Caco-2 (cell line): ENCODE measurements at regions of chr14 and their contacts with region 1.

Region 1: GRCh38 chr14:31207755-31208545 is at the start of gene HECTD1:
- DNase-seq: peak; percentile 90 to 95
- H3K4me3 ChIP-seq: peak within 1 kb of the TSS; percentile 91
- H3K4me3 Mint-ChIP-seq: peak within 1 kb of the TSS; percentile 84
- H3K27ac Mint-ChIP-seq: peak within 1 kb of the TSS; percentile 95
- H3K4me1 ChIP-seq: peaks cover 17% of the 10 kb centered on the region
- H3K4me1 Mint-ChIP-seq: peaks cover 17% of the 10 kb centered on the region
- H3K27me3 ChIP-seq: no peaks in the 10 kb centered on the region
- H3K27me3 Mint-ChIP-seq: no peaks in the 10 kb centered on the region
- CTCF ChIP-seq: peak; percentile 42 to 79
- total RNA-seq, gene HECTD1: 146 and 147 TPM in 2 replicates

Region 2: GRCh38 chr14:31229638-31230229 is 21.8 kb after region 1 on chr14:
- CTCF ChIA-PET with region 1: interaction called, 11 read pairs
- POLR2A ChIA-PET with region 1: interaction called, 6 read pairs
- intact Hi-C with region 1: loop called (anchors 1 kb)
- DNase-seq: peak; percentile 93 to 95
- H3K4me3 ChIP-seq: no peak overlapping the region
- H3K4me3 Mint-ChIP-seq: peak overlapping the region; percentile 62
- H3K27ac Mint-ChIP-seq: peak overlapping the region; percentile 72
- H3K4me1 ChIP-seq: peaks cover 20% of the 10 kb centered on the region
- H3K4me1 Mint-ChIP-seq: no peaks in the 10 kb centered on the region
- H3K27me3 ChIP-seq: no peaks in the 10 kb centered on the region
- H3K27me3 Mint-ChIP-seq: no peaks in the 10 kb centered on the region
- CTCF ChIP-seq: no peak

Region 3: GRCh38 chr14:31263485-31264133 is 55.7 kb after region 1 on chr14:
- CTCF ChIA-PET with region 1: interaction called, 4 read pairs
- POLR2A ChIA-PET with region 1: interaction called, 3 read pairs
- intact Hi-C with region 1: loop called (anchors 2 kb)
- DNase-seq: peak; percentile 71 to 78
- H3K4me3 ChIP-seq: no peak overlapping the region
- H3K4me3 Mint-ChIP-seq: no peak overlapping the region
- H3K27ac Mint-ChIP-seq: peak overlapping the region; percentile 77
- H3K4me1 ChIP-seq: peaks cover 50% of the 10 kb centered on the region
- H3K4me1 Mint-ChIP-seq: peaks cover 39% of the 10 kb centered on the region
- H3K27me3 ChIP-seq: no peaks in the 10 kb centered on the region
- H3K27me3 Mint-ChIP-seq: no peaks in the 10 kb centered on the region
- CTCF ChIP-seq: no peak

Region 4: DNA sequence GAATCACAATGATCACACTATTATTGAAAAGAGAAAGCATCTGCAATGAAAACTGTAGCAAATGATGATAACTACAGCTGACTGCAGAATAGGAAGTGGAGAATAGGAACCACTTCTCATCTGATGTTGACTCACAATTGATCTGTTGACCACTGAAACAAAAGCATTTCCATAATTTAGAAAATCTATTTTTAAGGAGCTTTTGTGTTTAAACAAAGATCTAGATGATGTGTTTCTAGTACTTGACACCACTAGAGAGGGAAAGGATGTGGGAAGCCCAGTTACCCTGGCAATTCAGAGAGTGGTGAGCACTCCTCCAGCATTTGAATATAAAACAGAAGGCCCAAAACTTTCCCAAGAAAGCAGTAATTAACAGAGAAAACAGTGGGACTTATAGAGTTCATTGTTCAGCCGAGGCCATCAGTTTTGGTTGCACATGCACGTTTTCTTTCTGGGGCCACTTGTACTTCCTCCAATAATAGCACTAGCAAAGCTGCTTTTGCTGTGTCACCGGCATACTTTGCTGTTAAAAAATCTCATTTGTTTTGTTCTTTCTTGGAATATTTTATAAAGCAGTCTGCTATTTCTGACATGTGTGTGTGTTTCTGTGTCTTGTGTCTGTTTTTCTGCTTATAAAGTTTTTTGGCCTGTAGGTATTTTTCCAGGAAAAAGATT is 75.8 kb after region 1 on chr14:
- CTCF ChIA-PET with region 1: interaction called, 9 read pairs
- POLR2A ChIA-PET with region 1: no interaction called
- intact Hi-C with region 1: loop called (anchors 5 kb)
- DNase-seq: no peak
- H3K4me3 ChIP-seq: no peak overlapping the region
- H3K4me3 Mint-ChIP-seq: no peak overlapping the region
- H3K27ac Mint-ChIP-seq: no peak overlapping the region
- H3K4me1 ChIP-seq: peaks cover 25% of the 10 kb centered on the region
- H3K4me1 Mint-ChIP-seq: peaks cover 22% of the 10 kb centered on the region
- H3K27me3 ChIP-seq: no peaks in the 10 kb centered on the region
- H3K27me3 Mint-ChIP-seq: no peaks in the 10 kb centered on the region
- CTCF ChIP-seq: no peak

Region 5: DNA sequence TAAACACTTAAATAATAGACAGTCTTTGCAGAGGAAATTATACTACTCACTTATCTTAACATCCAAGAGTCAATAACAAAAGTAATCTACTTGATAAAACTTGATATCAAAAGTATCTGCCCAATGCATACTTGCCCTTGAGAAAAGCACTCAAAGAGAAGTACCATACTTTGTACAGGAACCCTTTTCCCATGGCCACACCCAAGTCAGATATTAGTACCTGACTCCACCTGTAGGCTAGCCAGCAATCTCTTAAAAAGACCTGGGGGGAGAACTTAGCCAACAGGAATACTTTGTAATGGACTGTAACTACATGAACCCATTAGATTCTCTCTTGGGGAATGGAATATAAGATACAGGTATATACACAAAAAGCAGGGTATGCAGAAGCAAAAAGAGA is 99.2 kb after region 1 on chr14:
- CTCF ChIA-PET with region 1: no interaction called
- POLR2A ChIA-PET with region 1: no interaction called
- intact Hi-C with region 1: loop called (anchors 5 kb)
- DNase-seq: peak in 1 of 2 experiments; percentile 15
- H3K4me3 ChIP-seq: no peak overlapping the region
- H3K4me3 Mint-ChIP-seq: no peak overlapping the region
- H3K27ac Mint-ChIP-seq: no peak overlapping the region
- H3K4me1 ChIP-seq: no peaks in the 10 kb centered on the region
- H3K4me1 Mint-ChIP-seq: no peaks in the 10 kb centered on the region
- H3K27me3 ChIP-seq: no peaks in the 10 kb centered on the region
- H3K27me3 Mint-ChIP-seq: no peaks in the 10 kb centered on the region
- CTCF ChIP-seq: peak; percentile 14 to 21

Region 6: GRCh38 chr14:31326111-31326510 is 118.2 kb after region 1 on chr14:
- CTCF ChIA-PET with region 1: interaction called, 7 read pairs
- POLR2A ChIA-PET with region 1: no interaction called
- intact Hi-C with region 1: loop called (anchors 5 kb)
- DNase-seq: no peak
- H3K4me3 ChIP-seq: no peak overlapping the region
- H3K4me3 Mint-ChIP-seq: no peak overlapping the region
- H3K27ac Mint-ChIP-seq: no peak overlapping the region
- H3K4me1 ChIP-seq: no peaks in the 10 kb centered on the region
- H3K4me1 Mint-ChIP-seq: no peaks in the 10 kb centered on the region
- H3K27me3 ChIP-seq: no peaks in the 10 kb centered on the region
- H3K27me3 Mint-ChIP-seq: no peaks in the 10 kb centered on the region
- CTCF ChIP-seq: no peak

Region 7: DNA sequence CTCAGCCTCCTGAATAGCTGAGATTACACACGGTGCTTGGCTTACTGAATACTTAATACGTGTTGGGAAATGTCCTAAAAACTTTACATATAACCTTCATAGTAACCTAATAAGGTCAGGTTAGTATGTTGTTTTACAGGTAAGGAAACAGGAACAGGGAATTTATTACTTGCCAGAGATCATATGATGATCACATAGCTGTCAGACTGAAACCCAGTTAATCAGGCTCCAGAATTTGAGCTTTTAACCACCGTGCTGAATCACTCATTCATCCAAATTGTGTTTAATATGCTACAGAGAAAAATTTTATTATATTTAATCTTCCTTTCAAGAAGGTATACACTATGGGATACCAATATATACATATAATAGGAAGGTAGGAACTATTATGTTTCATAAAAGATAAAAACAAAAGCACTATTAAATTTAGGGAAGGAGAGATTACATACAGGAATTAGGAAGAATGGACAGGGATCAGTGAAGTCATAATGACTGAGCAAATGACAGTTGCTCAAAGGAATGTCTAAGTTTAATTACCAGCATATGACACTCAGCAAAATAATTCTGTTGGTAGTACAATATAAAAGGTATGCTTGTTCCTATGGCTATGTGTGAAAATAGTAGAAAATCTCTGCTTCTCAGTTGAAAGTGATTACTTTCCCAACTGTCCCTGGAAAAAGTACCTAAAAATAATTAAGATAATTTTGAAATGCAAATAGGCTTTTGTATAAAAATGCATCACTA is 153.1 kb after region 1 on chr14:
- CTCF ChIA-PET with region 1: no interaction called
- POLR2A ChIA-PET with region 1: no interaction called
- intact Hi-C with region 1: loop called (anchors 1 kb)
- DNase-seq: no peak
- H3K4me3 ChIP-seq: no peak overlapping the region
- H3K4me3 Mint-ChIP-seq: no peak overlapping the region
- H3K27ac Mint-ChIP-seq: no peak overlapping the region
- H3K4me1 ChIP-seq: no peaks in the 10 kb centered on the region
- H3K4me1 Mint-ChIP-seq: no peaks in the 10 kb centered on the region
- H3K27me3 ChIP-seq: no peaks in the 10 kb centered on the region
- H3K27me3 Mint-ChIP-seq: no peaks in the 10 kb centered on the region
- CTCF ChIP-seq: no peak